Breast epithelium (tissue), 4 donors: ENCODE measurements at regions of chr7 and their contacts with region 1.

Region 1: GRCh38 chr7:52197221-52197620 is 838.2 kb upstream of the POM121L12 start:
- DNase-seq: no peak
- H3K4me3 ChIP-seq: no peak overlapping the region
- H3K27ac ChIP-seq: no peak overlapping the region
- H3K4me1 ChIP-seq: no peaks in the 10 kb centered on the region
- H3K27me3 ChIP-seq: no peaks in the 10 kb centered on the region
- CTCF ChIP-seq: no peak
- POLR2A ChIP-seq: no peak

Region 2: DNA sequence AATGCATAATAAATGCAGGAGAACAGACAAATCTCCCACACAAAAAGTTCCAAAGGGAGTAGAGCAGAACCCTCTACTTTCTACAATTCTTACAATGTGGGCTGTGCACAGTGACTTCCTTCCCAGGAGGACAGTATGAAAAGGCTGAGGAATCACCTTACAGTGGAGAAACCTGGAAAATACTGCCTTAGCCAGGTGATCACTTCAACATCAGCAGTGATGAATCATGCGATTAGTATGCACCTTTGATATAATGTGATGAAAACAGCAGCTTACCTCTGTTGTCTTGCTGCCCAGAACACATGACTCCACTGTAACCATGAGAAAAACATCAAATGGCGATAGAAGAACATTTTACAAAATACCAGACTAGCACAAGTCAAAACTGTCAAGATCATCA is 508.5 kb after region 1 on chr7:
- intact Hi-C with region 1: no loop called
- DNase-seq: no peak
- H3K4me3 ChIP-seq: no peak overlapping the region
- H3K27ac ChIP-seq: no peak overlapping the region
- H3K4me1 ChIP-seq: no peaks in the 10 kb centered on the region
- H3K27me3 ChIP-seq: no peaks in the 10 kb centered on the region
- CTCF ChIP-seq: no peak
- POLR2A ChIP-seq: no peak

Region 3: GRCh38 chr7:53340220-53340619 is 1143.0 kb after region 1 on chr7:
- intact Hi-C with region 1: loop called (anchors 5 kb)
- DNase-seq: no peak
- H3K4me3 ChIP-seq: no peak overlapping the region
- H3K27ac ChIP-seq: no peak overlapping the region
- H3K4me1 ChIP-seq: no peaks in the 10 kb centered on the region
- H3K27me3 ChIP-seq: no peaks in the 10 kb centered on the region
- CTCF ChIP-seq: no peak
- POLR2A ChIP-seq: no peak